ENCODE measurements at regions of chr18 and their contacts with region 1.

Region 1: GRCh38 chr18:59718108-59718463 is 20.9 kb upstream of the CCBE1 start:
- DNase-seq: peak; percentile 65
- H3K4me3 Mint-ChIP-seq: no peak overlapping the region
- H3K27ac Mint-ChIP-seq: no peak overlapping the region
- H3K4me1 Mint-ChIP-seq: peaks cover 31% of the 10 kb centered on the region
- H3K27me3 Mint-ChIP-seq: no peaks in the 10 kb centered on the region
- CTCF ChIP-seq: no peak

Region 2: DNA sequence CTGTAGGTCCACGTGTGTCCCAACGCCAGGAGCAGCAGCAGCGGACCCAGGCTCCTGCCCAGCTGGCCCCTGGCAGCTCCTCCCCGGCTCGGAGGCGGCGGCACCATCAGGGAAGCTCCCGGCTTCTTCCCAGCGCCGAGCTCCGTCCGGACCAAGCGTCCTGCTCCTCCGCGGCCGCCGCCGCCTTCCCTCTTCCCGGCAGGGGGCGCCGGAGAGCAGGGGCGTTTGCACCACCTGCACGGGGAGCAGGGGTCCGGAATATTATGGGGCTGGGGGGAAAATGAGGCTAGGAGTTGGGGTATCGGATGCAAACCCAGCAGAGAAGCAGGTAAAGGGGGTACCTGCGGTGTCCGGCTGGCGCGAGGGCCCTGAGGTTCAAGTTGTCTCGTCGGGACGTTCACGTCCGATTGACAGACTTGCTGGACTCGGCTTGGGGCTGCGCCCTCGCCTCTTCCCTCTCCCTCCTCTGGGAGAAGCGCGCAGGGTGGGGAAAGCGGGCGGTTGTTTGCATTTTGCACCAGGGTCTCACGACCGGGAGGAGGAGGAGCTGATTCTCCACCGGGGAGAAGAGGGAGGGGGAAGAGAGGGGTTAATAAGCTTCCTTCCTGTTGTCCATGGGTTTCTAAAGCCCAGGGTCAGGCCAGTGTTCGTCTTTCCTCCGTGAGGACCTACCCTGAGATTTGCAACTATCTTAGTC is 20.7 kb before region 1 on chr18 and contains the start of gene CCBE1:
- CTCF ChIA-PET with region 1: interaction called, 12 read pairs
- intact Hi-C with region 1: no loop called
- DNase-seq: peak; percentile 82
- H3K4me3 Mint-ChIP-seq: peak within 1 kb of the TSS; percentile 74
- H3K27ac Mint-ChIP-seq: no peak within 1 kb of the TSS
- H3K4me1 Mint-ChIP-seq: peaks cover 8% of the 10 kb centered on the region
- H3K27me3 Mint-ChIP-seq: peaks cover 32% of the 10 kb centered on the region
- CTCF ChIP-seq: peak; percentile 89
- total RNA-seq, gene CCBE1: 0.05 and 0.12 TPM in 2 replicates

Region 3: DNA sequence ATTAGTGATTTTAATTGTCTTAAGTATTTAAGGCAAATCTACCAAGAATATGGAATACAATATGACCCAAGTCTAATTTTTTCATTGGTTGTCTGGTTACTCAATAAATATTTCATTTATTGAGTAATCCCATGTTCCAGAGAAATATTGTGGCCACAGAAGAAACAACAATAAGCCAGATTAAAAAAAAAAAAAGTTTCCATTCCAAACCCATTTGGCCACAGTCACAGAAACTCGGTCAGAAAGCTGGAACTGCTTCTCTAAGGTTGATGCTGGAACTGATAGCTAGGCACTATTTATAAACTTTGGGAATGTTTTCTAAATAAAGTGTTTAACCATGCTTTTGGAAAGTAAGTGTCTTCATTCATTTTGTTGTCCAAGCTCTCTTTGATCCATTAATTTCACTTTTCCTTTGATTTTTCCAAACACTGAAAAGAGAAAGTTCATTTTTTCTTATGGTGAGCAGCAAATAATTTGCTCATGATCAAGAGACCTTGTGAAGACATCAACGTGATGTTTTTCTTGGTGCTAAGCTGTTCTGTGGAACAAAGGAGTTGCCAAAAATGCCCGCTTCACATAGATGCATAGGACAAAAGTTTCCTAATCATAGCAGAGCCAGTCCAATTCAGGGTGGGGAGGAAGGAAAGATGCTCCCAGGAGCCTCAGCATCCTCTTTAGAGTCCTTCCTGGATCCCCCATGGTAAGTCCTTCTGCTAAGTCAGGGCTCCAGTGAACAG is 51.2 kb after region 1 on chr18:
- CTCF ChIA-PET with region 1: no interaction called
- intact Hi-C with region 1: no loop called
- DNase-seq: no peak
- H3K4me3 Mint-ChIP-seq: no peak overlapping the region
- H3K27ac Mint-ChIP-seq: no peak overlapping the region
- H3K4me1 Mint-ChIP-seq: no peaks in the 10 kb centered on the region
- H3K27me3 Mint-ChIP-seq: peaks cover 46% of the 10 kb centered on the region
- CTCF ChIP-seq: no peak